CD4-positive, alpha-beta T cell (primary cell): ENCODE measurements at regions of chr19 and their contacts with region 1.

Region 1: GRCh38 chr19:4867534-4868285 is at the start of gene PLIN3:
- DNase-seq: peak; percentile 83 to 94 (median 89)
- ATAC-seq: peak; percentile 93
- H3K4me3 ChIP-seq: peak within 1 kb of the TSS; percentile 89
- H3K4me3 Mint-ChIP-seq: peak within 1 kb of the TSS; percentile 88
- H3K27ac ChIP-seq: peak within 1 kb of the TSS in 1 of 2 donors; percentile 70
- H3K27ac Mint-ChIP-seq: peak within 1 kb of the TSS; percentile 69
- H3K4me1 ChIP-seq: peaks cover 26% of the 10 kb centered on the region
- H3K4me1 Mint-ChIP-seq: peaks cover 11% of the 10 kb centered on the region
- H3K27me3 ChIP-seq: no peaks in the 10 kb centered on the region
- H3K27me3 Mint-ChIP-seq: peaks cover 3% of the 10 kb centered on the region
- CTCF ChIP-seq: no peak
- total RNA-seq, gene PLIN3: 18.2 to 19.1 TPM

Region 2: DNA sequence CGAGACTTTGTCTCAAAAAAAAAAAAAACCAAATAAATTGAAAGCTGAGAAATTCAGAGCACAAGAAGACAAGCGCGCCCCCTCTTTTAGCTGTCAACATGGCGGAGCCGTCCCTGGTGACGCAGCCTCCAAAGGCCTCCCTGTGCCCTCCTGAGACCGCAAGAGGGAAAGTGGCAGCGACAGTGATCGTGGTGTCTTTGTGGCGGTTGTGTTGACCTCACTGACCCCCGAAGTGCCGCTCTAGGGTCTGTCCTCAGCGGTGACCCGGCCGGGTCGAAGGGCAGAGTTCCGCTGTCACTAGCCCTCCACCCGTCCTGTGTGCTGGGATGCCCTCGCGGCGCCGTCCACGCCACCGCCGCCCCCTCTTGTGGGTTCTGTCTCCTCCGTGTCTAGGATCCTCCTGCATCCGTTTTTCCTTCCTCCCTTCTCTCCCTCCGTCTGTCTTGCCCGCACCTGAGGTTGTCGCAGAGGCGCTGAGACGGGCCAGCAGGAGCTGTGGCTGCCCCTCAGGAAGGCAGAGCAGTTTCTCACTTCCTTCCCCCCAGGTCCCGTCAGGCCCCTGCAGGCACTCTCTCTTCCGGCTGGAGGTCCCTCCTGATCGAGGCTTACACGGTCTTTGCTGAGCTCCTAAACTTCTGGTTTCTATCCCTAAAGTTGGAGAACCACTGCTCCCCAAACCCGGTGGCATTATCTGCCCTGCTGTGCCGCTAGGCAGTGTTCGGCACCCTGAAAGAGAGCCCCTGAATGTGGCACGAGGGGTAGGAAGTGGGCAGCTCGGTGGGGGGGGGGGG is 48.8 kb after region 1 on chr19:
- CTCF ChIA-PET with region 1: interaction called, 60 read pairs
- POLR2A ChIA-PET with region 1: interaction called, 24 read pairs
- intact Hi-C with region 1: loop called (anchors 1 kb)
- DNase-seq: peak; percentile 30 to 73 (median 46)
- ATAC-seq: peak; percentile 38
- H3K4me3 ChIP-seq: peak overlapping the region; percentile 82
- H3K4me3 Mint-ChIP-seq: peak overlapping the region; percentile 98
- H3K27ac ChIP-seq: peak overlapping the region; percentile 65 to 90
- H3K27ac Mint-ChIP-seq: peak overlapping the region; percentile 96
- H3K4me1 ChIP-seq: peaks cover 56% of the 10 kb centered on the region
- H3K4me1 Mint-ChIP-seq: peaks cover 38% of the 10 kb centered on the region
- H3K27me3 ChIP-seq: no peaks in the 10 kb centered on the region
- H3K27me3 Mint-ChIP-seq: no peaks in the 10 kb centered on the region
- CTCF ChIP-seq: no peak

Region 3: GRCh38 chr19:4968462-4969291 is 101.0 kb after region 1 on chr19 and contains the start of gene KDM4B:
- CTCF ChIA-PET with region 1: no interaction called
- POLR2A ChIA-PET with region 1: interaction called, 7 read pairs
- intact Hi-C with region 1: loop called in 1 of 2 experiments (anchors 5 kb)
- DNase-seq: peak; percentile 96 to 100 (median 98)
- ATAC-seq: peak; percentile 88
- H3K4me3 ChIP-seq: peak within 1 kb of the TSS; percentile 63
- H3K4me3 Mint-ChIP-seq: peak within 1 kb of the TSS; percentile 92
- H3K27ac ChIP-seq: peak within 1 kb of the TSS; percentile 18 to 59
- H3K27ac Mint-ChIP-seq: peak within 1 kb of the TSS; percentile 87
- H3K4me1 ChIP-seq: peaks cover 44% of the 10 kb centered on the region
- H3K4me1 Mint-ChIP-seq: peaks cover 32% of the 10 kb centered on the region
- H3K27me3 ChIP-seq: no peaks in the 10 kb centered on the region
- H3K27me3 Mint-ChIP-seq: no peaks in the 10 kb centered on the region
- CTCF ChIP-seq: no peak
- total RNA-seq, gene KDM4B: 41.8 to 42.5 TPM

Region 4: GRCh38 chr19:5038631-5039271 is 171.0 kb after region 1 on chr19:
- CTCF ChIA-PET with region 1: no interaction called
- POLR2A ChIA-PET with region 1: no interaction called
- intact Hi-C with region 1: no loop called
- DNase-seq: no peak
- ATAC-seq: no peak
- H3K4me3 ChIP-seq: no peak overlapping the region
- H3K4me3 Mint-ChIP-seq: no peak overlapping the region
- H3K27ac ChIP-seq: no peak overlapping the region
- H3K27ac Mint-ChIP-seq: no peak overlapping the region
- H3K4me1 ChIP-seq: peaks cover 2% of the 10 kb centered on the region
- H3K4me1 Mint-ChIP-seq: no peaks in the 10 kb centered on the region
- H3K27me3 ChIP-seq: no peaks in the 10 kb centered on the region
- H3K27me3 Mint-ChIP-seq: no peaks in the 10 kb centered on the region
- CTCF ChIP-seq: no peak

Region 5: DNA sequence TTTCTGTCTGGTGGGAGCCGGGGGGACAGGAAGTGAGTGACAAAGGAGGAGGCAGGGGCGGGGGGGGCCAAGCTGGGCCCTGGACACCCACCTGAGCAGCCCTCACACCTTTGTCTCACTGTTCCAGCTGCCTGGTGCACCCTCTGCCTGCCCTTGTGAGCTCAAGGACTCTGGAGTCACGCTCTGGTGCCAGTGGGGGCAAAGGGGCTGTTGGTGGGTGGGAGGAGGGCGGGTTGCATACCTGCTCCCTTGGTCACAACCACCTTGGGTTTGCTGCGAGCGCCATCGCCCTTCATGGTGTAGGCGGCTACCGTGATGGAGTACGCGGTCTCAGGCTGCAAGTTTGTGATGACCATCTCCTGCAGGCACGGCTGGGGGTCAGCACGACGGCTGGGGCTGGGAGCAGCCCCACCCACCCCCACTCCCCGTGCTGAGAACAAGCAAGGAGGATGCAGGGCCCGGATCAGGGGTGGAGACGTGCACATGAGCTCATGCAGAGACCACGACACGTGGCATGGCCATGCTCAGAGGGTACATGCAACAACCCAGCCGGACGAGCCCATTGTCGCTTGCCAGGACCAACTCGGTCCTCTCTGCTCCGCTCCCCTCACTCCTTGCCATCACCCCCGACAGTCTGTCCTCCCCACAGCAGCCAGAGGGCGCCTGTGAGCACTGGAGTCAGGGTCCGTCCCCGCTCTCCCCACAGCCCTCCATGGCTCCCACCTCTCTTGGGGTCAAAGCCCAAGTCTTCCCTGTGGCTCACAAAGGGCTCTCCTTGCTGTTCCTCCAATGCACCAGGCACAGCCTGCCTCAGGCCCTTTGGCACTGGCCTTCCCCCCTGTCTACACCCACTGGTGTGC is 358.0 kb after region 1 on chr19:
- CTCF ChIA-PET with region 1: no interaction called
- POLR2A ChIA-PET with region 1: no interaction called
- intact Hi-C with region 1: no loop called
- DNase-seq: no peak
- ATAC-seq: no peak
- H3K4me3 ChIP-seq: no peak overlapping the region
- H3K4me3 Mint-ChIP-seq: no peak overlapping the region
- H3K27ac ChIP-seq: no peak overlapping the region
- H3K27ac Mint-ChIP-seq: no peak overlapping the region
- H3K4me1 ChIP-seq: no peaks in the 10 kb centered on the region
- H3K4me1 Mint-ChIP-seq: no peaks in the 10 kb centered on the region
- H3K27me3 ChIP-seq: peaks cover 3 to 7% of the 10 kb centered on the region in 2 experiments
- H3K27me3 Mint-ChIP-seq: peaks cover 30% of the 10 kb centered on the region
- CTCF ChIP-seq: peak; percentile 20